ENCODE measurements at regions of chrX and their contacts with region 1.

Region 1: GRCh38 chrX:12771445-12772069 is 19.7 kb upstream of the PRPS2 start:
- DNase-seq: peak; percentile 66
- ATAC-seq: peak; percentile 96
- H3K4me3 Mint-ChIP-seq: peak overlapping the region; percentile 43
- H3K27ac Mint-ChIP-seq: no peak overlapping the region
- H3K4me1 Mint-ChIP-seq: no peaks in the 10 kb centered on the region
- H3K27me3 Mint-ChIP-seq: peaks cover 8% of the 10 kb centered on the region
- CTCF ChIP-seq: peak; percentile 63

Region 2: DNA sequence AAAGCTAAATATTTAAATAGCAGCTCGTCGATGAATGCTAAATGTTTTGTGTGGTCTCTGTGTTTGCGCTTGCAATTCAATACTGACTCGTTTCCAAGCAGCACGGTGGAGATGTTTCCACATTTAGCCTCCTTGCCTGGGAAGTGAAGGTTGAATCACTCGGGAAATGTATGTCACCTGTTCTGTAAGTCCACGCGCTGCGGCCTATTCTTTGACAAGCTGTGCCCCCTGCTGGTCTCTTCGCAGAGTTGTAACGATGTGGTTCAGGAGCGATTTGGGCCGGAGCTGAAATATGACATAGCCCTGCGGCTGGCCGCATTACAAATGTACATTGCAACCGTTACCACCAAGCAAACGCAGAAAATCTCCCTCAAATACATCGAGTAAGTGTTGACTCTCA is 69.9 kb before region 1 on chrX:
- CTCF ChIA-PET with region 1: interaction called, 23 read pairs
- POLR2A ChIA-PET with region 1: no interaction called
- DNase-seq: peak; percentile 58
- ATAC-seq: peak; percentile 78
- H3K4me3 Mint-ChIP-seq: no peak overlapping the region
- H3K27ac Mint-ChIP-seq: no peak overlapping the region
- H3K4me1 Mint-ChIP-seq: peaks cover 13% of the 10 kb centered on the region
- H3K27me3 Mint-ChIP-seq: no peaks in the 10 kb centered on the region
- CTCF ChIP-seq: peak; percentile 46; the same call in 1 of the 2 replicates

Region 3: DNA sequence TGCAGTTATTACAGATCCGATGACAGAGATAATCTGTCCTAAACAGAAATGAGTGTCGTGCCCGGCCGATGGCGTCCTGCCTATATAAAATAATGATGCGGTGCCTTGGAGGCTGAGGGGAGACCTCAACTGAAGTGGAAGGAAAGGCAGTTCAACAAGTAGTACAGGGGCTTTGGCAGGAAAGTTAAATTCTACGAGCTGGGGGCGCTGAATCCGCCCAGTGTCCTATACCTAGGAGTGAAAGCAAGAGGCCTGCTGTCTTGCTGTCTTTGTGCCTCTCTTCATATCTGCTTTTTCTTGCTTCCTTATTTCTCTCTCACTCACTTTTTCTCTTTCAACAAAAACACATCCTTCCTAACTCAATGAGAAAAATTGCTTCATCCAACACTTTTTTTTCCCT is 62.5 kb before region 1 on chrX:
- CTCF ChIA-PET with region 1: interaction called, 16 read pairs
- POLR2A ChIA-PET with region 1: no interaction called
- DNase-seq: peak; percentile 72
- ATAC-seq: peak; percentile 89
- H3K4me3 Mint-ChIP-seq: no peak overlapping the region
- H3K27ac Mint-ChIP-seq: no peak overlapping the region
- H3K4me1 Mint-ChIP-seq: peaks cover 2% of the 10 kb centered on the region; the same call in 1 of the 2 replicates
- H3K27me3 Mint-ChIP-seq: no peaks in the 10 kb centered on the region
- CTCF ChIP-seq: no peak

Region 4: GRCh38 chrX:12751887-12752286 is 19.7 kb before region 1 on chrX:
- CTCF ChIA-PET with region 1: interaction called, 12 read pairs
- POLR2A ChIA-PET with region 1: no interaction called
- DNase-seq: no peak
- ATAC-seq: no peak
- H3K4me3 Mint-ChIP-seq: no peak overlapping the region
- H3K27ac Mint-ChIP-seq: no peak overlapping the region
- H3K4me1 Mint-ChIP-seq: peaks cover 5% of the 10 kb centered on the region
- H3K27me3 Mint-ChIP-seq: no peaks in the 10 kb centered on the region; the same call in 1 of the 2 replicates
- CTCF ChIP-seq: no peak

Region 5: DNA sequence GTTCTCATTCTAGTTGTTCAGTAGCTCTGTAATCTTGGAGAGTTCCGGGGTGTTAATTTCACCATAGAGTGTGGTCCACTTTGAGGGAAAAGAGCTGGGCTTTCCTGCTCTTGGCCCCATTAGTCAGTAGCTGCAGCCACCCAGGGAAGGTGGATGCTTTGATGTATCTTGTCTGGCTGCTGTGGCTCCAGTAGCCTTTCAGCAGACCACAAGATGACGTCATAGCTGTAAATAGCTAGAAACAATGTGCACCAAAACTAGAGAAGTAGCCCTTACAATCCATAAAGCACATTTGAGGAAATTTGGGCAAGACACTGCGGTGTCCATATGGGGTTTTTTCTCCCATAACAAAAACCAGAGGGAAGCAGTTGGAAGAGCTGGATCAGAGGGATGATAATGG is 13.3 kb before region 1 on chrX:
- CTCF ChIA-PET with region 1: interaction called, 12 read pairs
- POLR2A ChIA-PET with region 1: no interaction called
- DNase-seq: no peak
- ATAC-seq: no peak
- H3K4me3 Mint-ChIP-seq: no peak overlapping the region
- H3K27ac Mint-ChIP-seq: no peak overlapping the region
- H3K4me1 Mint-ChIP-seq: no peaks in the 10 kb centered on the region
- H3K27me3 Mint-ChIP-seq: no peaks in the 10 kb centered on the region; the same call in 1 of the 2 replicates
- CTCF ChIP-seq: no peak

Region 6: DNA sequence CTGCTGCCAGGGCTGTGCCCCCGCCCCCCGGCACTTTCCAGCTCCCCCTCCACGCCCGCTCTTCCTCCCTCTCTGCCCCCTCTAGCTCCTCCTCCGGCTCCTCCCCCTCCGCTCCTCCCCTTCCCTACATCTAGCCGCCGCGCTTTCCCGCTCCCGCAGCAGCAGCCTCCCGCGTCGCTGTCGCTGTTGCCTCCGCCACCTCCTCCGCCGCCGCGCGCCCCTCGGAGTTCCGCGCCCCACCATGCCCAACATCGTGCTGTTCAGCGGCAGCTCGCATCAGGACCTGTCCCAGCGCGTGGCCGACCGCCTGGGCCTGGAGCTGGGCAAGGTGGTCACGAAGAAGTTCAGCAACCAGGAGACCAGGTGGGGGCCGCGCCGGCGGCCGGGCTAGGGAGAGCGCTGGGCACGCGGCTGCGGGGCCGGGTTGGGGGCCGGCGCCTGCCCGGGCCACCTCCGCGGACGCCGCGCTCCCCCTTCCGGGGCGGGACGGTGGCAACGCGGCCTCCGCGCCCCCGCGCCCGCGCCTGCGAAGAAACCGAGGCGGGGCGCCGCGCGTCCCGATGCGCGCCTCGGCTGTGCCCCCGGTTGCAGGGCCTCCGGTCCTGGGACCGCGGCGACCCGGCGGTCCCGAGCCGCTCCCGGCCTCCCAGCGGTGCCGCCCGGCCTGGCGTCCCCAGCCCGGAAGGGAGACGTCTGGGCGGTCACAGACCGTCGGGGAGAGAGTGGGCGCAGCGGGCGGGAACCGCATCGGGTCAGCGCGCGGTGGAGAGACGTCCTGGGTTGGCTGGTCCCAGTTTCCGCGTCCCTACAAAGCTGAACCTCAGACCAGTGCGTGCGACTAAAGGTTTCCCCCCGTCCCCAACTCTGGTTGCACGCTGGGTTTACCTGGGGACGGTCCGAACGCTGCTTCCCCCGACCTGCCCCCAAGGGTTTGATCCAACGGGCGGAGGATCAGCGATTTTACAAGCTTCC is 20.0 kb after region 1 on chrX and contains the start of gene PRPS2:
- CTCF ChIA-PET with region 1: interaction called, 30 read pairs
- POLR2A ChIA-PET with region 1: interaction called, 3 read pairs
- DNase-seq: peak; percentile 71
- ATAC-seq: peak; percentile 91
- H3K4me3 Mint-ChIP-seq: peak within 1 kb of the TSS; percentile 77
- H3K27ac Mint-ChIP-seq: no peak within 1 kb of the TSS
- H3K4me1 Mint-ChIP-seq: peaks cover 14% of the 10 kb centered on the region
- H3K27me3 Mint-ChIP-seq: peaks cover 23% of the 10 kb centered on the region
- CTCF ChIP-seq: no peak
- total RNA-seq, gene PRPS2: 33.4 to 40.8 TPM (median 38.4 TPM) in 3 replicates

Region 7: GRCh38 chrX:12881914-12882313 is 110.4 kb after region 1 on chrX:
- CTCF ChIA-PET with region 1: no interaction called
- POLR2A ChIA-PET with region 1: no interaction called
- DNase-seq: no peak
- ATAC-seq: no peak
- H3K4me3 Mint-ChIP-seq: no peak overlapping the region
- H3K27ac Mint-ChIP-seq: no peak overlapping the region; the same call in 1 of the 2 replicates
- H3K4me1 Mint-ChIP-seq: no peaks in the 10 kb centered on the region
- H3K27me3 Mint-ChIP-seq: no peaks in the 10 kb centered on the region; the same call in 1 of the 2 replicates
- CTCF ChIP-seq: no peak